CD8-positive, alpha-beta T cell (primary cell): ENCODE measurements at regions of chr5 and their contacts with region 1.

Region 1: GRCh38 chr5:112707187-112708102 is 30.2 kb upstream of the APC start:
- DNase-seq: peak; percentile 91 to 99 (median 96)
- ATAC-seq: peak; percentile 92
- H3K4me3 ChIP-seq: peak overlapping the region; percentile 83 to 99
- H3K4me3 Mint-ChIP-seq: peak overlapping the region; percentile 92
- H3K27ac ChIP-seq: peak overlapping the region; percentile 75 to 84
- H3K27ac Mint-ChIP-seq: peak overlapping the region; percentile 92
- H3K4me1 ChIP-seq: peaks cover 43% of the 10 kb centered on the region
- H3K4me1 Mint-ChIP-seq: peaks cover 57% of the 10 kb centered on the region
- H3K27me3 ChIP-seq: no peaks in the 10 kb centered on the region
- H3K27me3 Mint-ChIP-seq: no peaks in the 10 kb centered on the region
- CTCF ChIP-seq: no peak

Region 2: DNA sequence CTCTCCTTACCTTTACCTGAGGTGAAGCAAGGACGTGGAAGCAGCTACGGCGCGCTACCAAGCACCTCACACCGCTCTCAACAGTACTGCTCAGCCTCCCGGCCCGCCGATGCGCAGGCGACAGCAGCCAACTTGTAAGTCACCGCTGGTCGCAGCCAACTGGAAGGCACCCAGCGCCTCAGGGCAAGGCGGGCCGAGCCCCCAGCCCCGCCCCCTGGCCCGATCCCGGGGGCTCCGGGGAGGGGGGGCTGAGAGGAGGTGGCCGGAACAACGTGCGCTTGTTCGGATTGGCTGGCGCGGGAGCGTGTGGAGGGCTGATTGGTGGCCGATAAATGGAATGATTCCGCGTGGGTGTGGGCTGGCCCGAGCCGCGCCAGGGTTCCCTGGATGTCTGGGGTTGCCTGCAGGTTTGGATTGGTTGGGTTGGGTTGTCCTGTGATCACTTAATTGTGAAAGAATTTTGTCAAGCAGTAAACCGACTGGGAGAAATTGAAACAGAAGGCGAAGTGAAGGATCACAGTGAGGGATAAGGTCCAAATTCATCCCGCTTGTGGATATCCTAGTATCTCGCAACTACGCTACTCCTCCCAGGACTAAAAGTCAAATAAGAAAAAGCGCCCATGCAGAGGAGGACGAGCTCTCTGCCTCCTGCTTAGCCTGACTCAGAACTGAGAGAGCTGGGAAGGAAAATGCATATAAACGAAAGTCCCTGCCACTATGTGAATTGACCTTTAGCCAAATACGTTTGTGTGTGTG is 1194.9 kb before region 1 on chr5 and contains the start of gene STARD4:
- CTCF ChIA-PET with region 1: no interaction called
- POLR2A ChIA-PET with region 1: no interaction called
- intact Hi-C with region 1: loop called (anchors 10 kb)
- DNase-seq: peak; percentile 89 to 97 (median 95)
- ATAC-seq: peak; percentile 94
- H3K4me3 ChIP-seq: peak within 1 kb of the TSS; percentile 96 to 97
- H3K4me3 Mint-ChIP-seq: peak within 1 kb of the TSS; percentile 96
- H3K27ac ChIP-seq: peak within 1 kb of the TSS; percentile 75 to 92
- H3K27ac Mint-ChIP-seq: peak within 1 kb of the TSS; percentile 95
- H3K4me1 ChIP-seq: peaks cover 26% of the 10 kb centered on the region
- H3K4me1 Mint-ChIP-seq: peaks cover 41% of the 10 kb centered on the region
- H3K27me3 ChIP-seq: no peaks in the 10 kb centered on the region
- H3K27me3 Mint-ChIP-seq: no peaks in the 10 kb centered on the region
- CTCF ChIP-seq: no peak
- total RNA-seq, gene STARD4: 31.7 to 32.4 TPM

Region 3: DNA sequence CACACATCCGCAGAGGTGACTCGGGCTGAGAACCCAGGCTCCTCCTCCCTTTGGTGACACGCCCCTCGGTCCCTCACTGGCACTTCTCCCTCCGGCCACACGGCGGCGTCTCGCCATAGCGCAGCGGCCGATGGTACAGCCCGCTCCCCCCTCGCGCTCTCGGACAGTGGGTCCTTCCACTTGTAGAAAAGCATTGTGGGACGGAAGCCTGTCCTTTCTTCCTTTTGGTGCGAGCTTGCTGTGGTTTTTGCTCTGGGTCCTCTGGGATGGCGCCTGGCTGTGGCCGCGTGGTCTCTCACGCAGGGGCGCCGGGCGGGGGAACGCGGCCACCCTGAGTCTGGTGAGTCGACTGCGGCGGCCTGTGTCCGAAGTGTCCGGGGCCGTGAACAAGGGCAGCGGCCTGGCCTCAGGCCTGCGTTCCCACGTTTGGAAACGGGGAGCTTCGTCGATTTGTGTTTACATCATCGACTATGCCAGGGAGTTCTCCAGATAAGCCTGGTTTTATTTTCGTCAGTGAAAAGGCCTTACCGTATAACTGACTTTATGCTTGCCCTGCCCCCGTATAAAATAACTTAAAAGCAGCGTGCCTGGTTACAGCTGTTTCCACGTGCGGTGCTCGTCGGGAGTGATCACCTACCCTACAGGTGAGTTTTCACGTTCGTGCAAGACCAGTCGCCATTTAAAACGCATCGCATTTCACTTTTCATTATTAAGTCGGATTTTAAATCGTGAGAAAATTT is 546.6 kb before region 1 on chr5:
- CTCF ChIA-PET with region 1: interaction called, 3 read pairs
- POLR2A ChIA-PET with region 1: no interaction called
- intact Hi-C with region 1: loop called (anchors 1 to 2 kb)
- DNase-seq: peak; percentile 85 to 96 (median 92)
- ATAC-seq: peak; percentile 99
- H3K4me3 ChIP-seq: peak overlapping the region; percentile 74 to 82
- H3K4me3 Mint-ChIP-seq: peak overlapping the region; percentile 95
- H3K27ac ChIP-seq: peak overlapping the region; percentile 58 to 70
- H3K27ac Mint-ChIP-seq: peak overlapping the region; percentile 93
- H3K4me1 ChIP-seq: peaks cover 20% of the 10 kb centered on the region
- H3K4me1 Mint-ChIP-seq: peaks cover 40% of the 10 kb centered on the region
- H3K27me3 ChIP-seq: no peaks in the 10 kb centered on the region
- H3K27me3 Mint-ChIP-seq: no peaks in the 10 kb centered on the region
- CTCF ChIP-seq: peak; percentile 85

Region 4: DNA sequence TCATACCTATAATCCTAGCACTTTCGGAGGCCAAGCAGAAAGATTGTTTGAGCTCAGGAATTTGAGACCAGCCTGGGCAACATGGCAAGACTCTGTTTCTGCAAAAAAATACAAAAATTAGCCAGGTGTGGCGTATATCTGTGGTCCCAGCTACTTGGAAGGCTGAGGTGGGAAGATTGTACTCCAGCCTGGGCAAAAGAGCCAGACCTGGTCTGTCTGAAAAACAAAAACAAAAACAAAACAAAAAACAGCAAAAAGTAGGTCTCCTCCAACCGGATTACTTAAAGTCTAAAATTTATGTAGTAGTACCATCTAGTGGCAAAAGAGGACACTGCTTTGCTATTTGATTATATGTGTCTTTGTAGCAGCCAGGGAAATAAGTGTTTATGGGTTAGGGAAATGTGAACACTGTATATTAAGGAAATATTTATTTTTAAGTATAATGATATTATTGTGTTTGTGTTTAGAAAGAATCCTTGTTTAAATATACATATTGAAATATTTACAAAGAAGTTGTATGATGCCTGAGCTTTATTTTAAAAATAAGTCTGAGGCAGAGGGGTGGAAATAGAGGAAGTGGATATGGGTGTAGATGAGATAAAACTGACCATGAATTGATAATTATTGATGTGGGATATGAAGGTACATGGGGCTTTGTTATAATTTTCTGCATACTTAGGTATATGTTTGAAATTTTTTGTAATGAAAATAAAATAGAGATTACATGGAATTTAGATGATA is 50.2 kb after region 1 on chr5:
- CTCF ChIA-PET with region 1: interaction called, 11 read pairs
- POLR2A ChIA-PET with region 1: no interaction called
- intact Hi-C with region 1: loop called in 1 of 2 experiments (anchors 1 kb)
- DNase-seq: peak in 3 of 9 experiments; percentile 51 to 76 (median 69)
- ATAC-seq: peak; percentile 84
- H3K4me3 ChIP-seq: no peak overlapping the region
- H3K4me3 Mint-ChIP-seq: no peak overlapping the region
- H3K27ac ChIP-seq: no peak overlapping the region
- H3K27ac Mint-ChIP-seq: peak overlapping the region; percentile 34
- H3K4me1 ChIP-seq: no peaks in the 10 kb centered on the region
- H3K4me1 Mint-ChIP-seq: peaks cover 12% of the 10 kb centered on the region
- H3K27me3 ChIP-seq: no peaks in the 10 kb centered on the region
- H3K27me3 Mint-ChIP-seq: no peaks in the 10 kb centered on the region
- CTCF ChIP-seq: peak; percentile 83

Region 5: GRCh38 chr5:112976432-112977309 is 269.2 kb after region 1 on chr5 and contains the start of gene DCP2:
- CTCF ChIA-PET with region 1: no interaction called
- POLR2A ChIA-PET with region 1: no interaction called
- intact Hi-C with region 1: loop called (anchors 1 to 2 kb)
- DNase-seq: peak; percentile 88 to 99 (median 95)
- ATAC-seq: peak; percentile 96
- H3K4me3 ChIP-seq: peak within 1 kb of the TSS; percentile 57 to 98
- H3K4me3 Mint-ChIP-seq: peak within 1 kb of the TSS; percentile 100
- H3K27ac ChIP-seq: peak within 1 kb of the TSS; percentile 81
- H3K27ac Mint-ChIP-seq: peak within 1 kb of the TSS; percentile 97
- H3K4me1 ChIP-seq: peaks cover 24% of the 10 kb centered on the region
- H3K4me1 Mint-ChIP-seq: peaks cover 43% of the 10 kb centered on the region
- H3K27me3 ChIP-seq: no peaks in the 10 kb centered on the region
- H3K27me3 Mint-ChIP-seq: no peaks in the 10 kb centered on the region
- CTCF ChIP-seq: no peak
- total RNA-seq, gene DCP2: 65.4 to 69.8 TPM

Region 6: DNA sequence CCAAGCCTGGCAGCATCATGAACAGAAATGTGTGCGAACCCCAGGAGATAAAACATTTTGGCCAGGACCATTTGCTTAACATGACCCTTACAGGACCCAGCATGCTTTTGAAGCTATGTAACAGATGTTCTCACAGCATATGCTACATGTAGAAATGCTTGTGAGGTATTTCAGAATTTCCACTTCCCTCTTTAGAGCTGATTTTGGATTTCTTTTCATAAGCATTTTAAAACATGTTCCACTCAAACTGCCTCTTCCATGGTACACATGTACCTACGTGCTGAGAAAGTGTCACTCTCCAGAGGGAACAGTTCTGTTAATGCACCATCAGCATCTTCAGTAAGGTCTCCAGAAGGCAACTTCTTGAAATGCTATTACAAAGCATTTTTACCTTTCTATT is 743.0 kb after region 1 on chr5:
- CTCF ChIA-PET with region 1: no interaction called
- POLR2A ChIA-PET with region 1: no interaction called
- intact Hi-C with region 1: no loop called
- DNase-seq: no peak
- ATAC-seq: no peak
- H3K4me3 ChIP-seq: no peak overlapping the region
- H3K4me3 Mint-ChIP-seq: no peak overlapping the region
- H3K27ac ChIP-seq: no peak overlapping the region
- H3K27ac Mint-ChIP-seq: no peak overlapping the region
- H3K4me1 ChIP-seq: no peaks in the 10 kb centered on the region
- H3K4me1 Mint-ChIP-seq: peaks cover 5% of the 10 kb centered on the region
- H3K27me3 ChIP-seq: no peaks in the 10 kb centered on the region
- H3K27me3 Mint-ChIP-seq: peaks cover 23% of the 10 kb centered on the region
- CTCF ChIP-seq: no peak